ENCODE measurements at regions of chr11 and their contacts with region 1.

Region 1: DNA sequence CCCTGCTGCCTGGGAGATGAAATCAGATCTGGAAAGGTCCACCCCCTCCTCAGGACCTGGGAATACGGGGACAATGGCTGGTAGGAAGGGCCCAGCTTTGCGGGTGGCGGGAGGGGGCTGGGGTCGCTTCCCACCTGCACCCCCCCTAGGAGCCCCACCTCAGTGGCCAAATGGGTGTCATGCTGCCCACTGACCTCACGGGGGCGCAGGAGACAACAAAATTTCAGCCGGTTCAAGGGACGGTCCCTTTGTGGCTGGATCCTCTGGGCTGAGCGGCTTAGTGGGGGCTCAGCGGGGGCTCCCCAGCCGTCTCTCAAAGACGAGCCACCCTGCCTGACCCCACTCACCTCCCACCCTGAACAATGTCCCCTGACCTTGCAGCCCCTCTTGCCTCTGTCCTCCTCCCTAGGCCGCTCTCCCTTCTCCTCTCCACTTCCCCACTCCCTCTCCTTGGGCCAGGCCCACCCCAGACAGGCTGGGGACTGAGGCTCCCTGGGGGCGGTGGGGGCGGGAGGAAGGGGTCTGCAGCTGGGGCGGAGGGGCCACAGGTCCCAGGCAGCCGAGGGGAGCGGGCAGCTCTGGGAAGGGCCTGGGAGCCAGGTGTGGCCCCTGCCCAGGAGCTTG is 39.3 kb upstream of the H19 start:
- DNase-seq: no peak
- H3K4me3 ChIP-seq: no peak overlapping the region
- CTCF ChIP-seq: no peak

Region 2: GRCh38 chr11:1896923-1897322 is 140.1 kb before region 1 on chr11:
- CTCF ChIA-PET with region 1: no interaction called
- POLR2A ChIA-PET with region 1: no interaction called
- DNase-seq: no peak
- H3K4me3 ChIP-seq: no peak overlapping the region
- CTCF ChIP-seq: no peak

Region 3: GRCh38 chr11:1992111-1992510 is 44.9 kb before region 1 on chr11:
- CTCF ChIA-PET with region 1: no interaction called
- POLR2A ChIA-PET with region 1: no interaction called
- DNase-seq: no peak
- H3K4me3 ChIP-seq: no peak overlapping the region
- CTCF ChIP-seq: no peak

Region 4: GRCh38 chr11:2142762-2143202 is 105.8 kb after region 1 on chr11:
- CTCF ChIA-PET with region 1: interaction called, 1,226 read pairs
- POLR2A ChIA-PET with region 1: no interaction called
- DNase-seq: no peak
- H3K4me3 ChIP-seq: no peak overlapping the region
- CTCF ChIP-seq: no peak

Measured in AG04449 (cell line).